PC-3 (cell line): ENCODE measurements at regions of chr11 and their contacts with region 1.

Region 1: GRCh38 chr11:122617297-122617696 is 38.2 kb upstream of the UBASH3B start:
- DNase-seq: peak; percentile 77
- ATAC-seq: peak; percentile 73
- H3K4me3 ChIP-seq: no peak overlapping the region
- H3K27ac ChIP-seq: no peak overlapping the region
- H3K4me1 ChIP-seq: peaks cover 2% of the 10 kb centered on the region; the same call in 1 of the 2 replicates
- H3K27me3 ChIP-seq: no peaks in the 10 kb centered on the region
- CTCF ChIP-seq: no peak

Region 2: DNA sequence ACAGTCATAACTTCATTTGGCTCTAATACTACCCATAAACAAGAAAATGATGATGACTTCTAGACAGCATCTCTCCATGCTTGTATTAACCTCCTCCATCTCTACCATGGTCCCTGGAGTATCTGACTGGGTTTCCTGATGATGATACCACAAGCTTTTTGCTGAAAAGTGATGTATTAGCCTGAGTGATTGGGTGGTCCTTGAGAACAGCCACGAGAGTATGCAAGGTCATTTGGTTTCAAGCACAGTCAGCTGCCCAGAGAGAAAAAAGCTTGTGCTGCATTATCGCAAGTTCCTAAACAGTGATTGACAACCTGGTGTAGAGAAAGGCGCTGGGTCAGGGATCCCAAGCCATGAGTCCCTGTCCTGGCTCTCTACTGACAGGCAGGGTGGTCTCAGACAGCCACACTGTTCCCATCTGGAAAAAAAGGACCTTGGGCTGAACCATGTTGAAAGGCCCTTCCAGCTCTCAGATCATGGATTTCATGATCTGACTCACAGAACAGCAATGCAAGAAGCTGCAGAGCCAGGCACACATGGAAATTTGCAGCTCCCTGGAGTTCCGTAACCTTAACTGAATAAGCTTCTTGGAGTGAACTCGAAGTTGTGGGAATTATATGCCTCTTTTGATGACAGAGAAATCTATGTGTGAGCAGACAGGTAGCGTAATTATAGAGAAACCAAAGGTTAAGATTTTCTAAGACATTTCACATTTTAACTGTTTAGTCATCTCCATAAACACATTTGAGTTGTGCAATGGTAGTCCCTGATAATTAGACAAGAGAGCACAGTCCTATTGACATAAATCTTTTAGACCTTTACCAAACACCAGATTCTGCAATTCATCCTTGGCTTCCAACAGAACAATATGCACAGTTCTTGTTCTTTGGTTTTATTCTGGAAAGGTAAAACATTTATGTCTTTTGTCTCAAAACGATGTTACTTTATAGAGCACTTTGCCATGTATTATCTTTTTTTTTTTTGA is 15.9 kb before region 1 on chr11:
- CTCF ChIA-PET with region 1: interaction called, 11 read pairs
- POLR2A ChIA-PET with region 1: interaction called, 3 read pairs
- intact Hi-C with region 1: no loop called
- DNase-seq: peak; percentile 27
- ATAC-seq: peak; percentile 37; the same call in 1 of the 2 replicates
- H3K4me3 ChIP-seq: no peak overlapping the region
- H3K27ac ChIP-seq: no peak overlapping the region
- H3K4me1 ChIP-seq: no peaks in the 10 kb centered on the region
- H3K27me3 ChIP-seq: peaks cover 38% of the 10 kb centered on the region
- CTCF ChIP-seq: no peak